Natural killer cell (primary cell): ENCODE measurements at regions of chr6 and their contacts with region 1.

Region 1: GRCh38 chr6:45922728-45923351 is 92.8 kb downstream of the CLIC5 start:
- DNase-seq: peak; percentile 42 to 70
- ATAC-seq: peak; percentile 50 to 73 (median 69)
- H3K4me3 ChIP-seq: no peak overlapping the region
- H3K4me3 Mint-ChIP-seq: no peak overlapping the region
- H3K27ac ChIP-seq: no peak overlapping the region
- H3K27ac Mint-ChIP-seq: no peak overlapping the region
- H3K4me1 ChIP-seq: no peaks in the 10 kb centered on the region
- H3K4me1 Mint-ChIP-seq: peaks cover 6 to 10% of the 10 kb centered on the region in 2 donors
- H3K27me3 ChIP-seq: no peaks in the 10 kb centered on the region
- H3K27me3 Mint-ChIP-seq: peaks cover 0 to 5% of the 10 kb centered on the region in 2 donors
- CTCF ChIP-seq: peak; percentile 67

Region 2: GRCh38 chr6:44475779-44476434 is 1446.9 kb before region 1 on chr6:
- intact Hi-C with region 1: loop called (anchors 2 kb)
- DNase-seq: peak; percentile 37 to 77
- ATAC-seq: peak; percentile 51 to 81 (median 70)
- H3K4me3 ChIP-seq: no peak overlapping the region
- H3K4me3 Mint-ChIP-seq: no peak overlapping the region
- H3K27ac ChIP-seq: no peak overlapping the region
- H3K27ac Mint-ChIP-seq: no peak overlapping the region
- H3K4me1 ChIP-seq: peaks cover 8% of the 10 kb centered on the region
- H3K4me1 Mint-ChIP-seq: no peaks in the 10 kb centered on the region
- H3K27me3 ChIP-seq: no peaks in the 10 kb centered on the region
- H3K27me3 Mint-ChIP-seq: peaks cover 9 to 13% of the 10 kb centered on the region in 2 donors
- CTCF ChIP-seq: peak; percentile 58

Region 3: DNA sequence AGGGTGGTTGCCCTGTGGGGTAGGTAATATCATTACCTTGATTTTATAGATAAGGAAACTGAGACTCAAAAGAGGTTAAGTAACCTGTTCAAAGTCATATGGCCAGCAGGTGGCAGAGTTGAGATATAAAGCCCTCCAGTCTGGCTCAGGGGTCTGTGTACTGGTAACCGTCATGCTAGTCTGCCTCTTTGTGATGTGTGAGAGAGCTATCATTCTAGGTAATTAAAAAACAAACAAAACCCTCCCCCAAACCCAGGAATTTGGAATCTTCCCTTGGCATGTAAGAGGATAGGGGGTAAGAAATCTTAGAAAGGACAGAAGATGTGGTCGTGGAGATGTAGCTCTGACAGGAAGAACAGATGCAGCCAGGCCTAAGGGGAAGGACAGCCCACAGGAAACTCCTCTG is 1329.3 kb before region 1 on chr6:
- intact Hi-C with region 1: loop called (anchors 2 kb)
- DNase-seq: peak in 1 of 2 donors; percentile 73
- ATAC-seq: peak in 2 of 3 donors; percentile 29 to 50
- H3K4me3 ChIP-seq: no peak overlapping the region
- H3K4me3 Mint-ChIP-seq: no peak overlapping the region
- H3K27ac ChIP-seq: no peak overlapping the region
- H3K27ac Mint-ChIP-seq: no peak overlapping the region
- H3K4me1 ChIP-seq: no peaks in the 10 kb centered on the region
- H3K4me1 Mint-ChIP-seq: peaks cover 5 to 6% of the 10 kb centered on the region in 2 donors
- H3K27me3 ChIP-seq: no peaks in the 10 kb centered on the region
- H3K27me3 Mint-ChIP-seq: peaks cover 7 to 23% of the 10 kb centered on the region in 2 donors
- CTCF ChIP-seq: peak; percentile 48

Region 4: GRCh38 chr6:45590225-45590624 is 332.6 kb before region 1 on chr6:
- intact Hi-C with region 1: no loop called
- DNase-seq: no peak
- ATAC-seq: peak in 1 of 3 donors; percentile 30
- H3K4me3 ChIP-seq: no peak overlapping the region
- H3K4me3 Mint-ChIP-seq: no peak overlapping the region
- H3K27ac ChIP-seq: no peak overlapping the region
- H3K27ac Mint-ChIP-seq: peak overlapping the region in 1 of 2 donors; percentile 27
- H3K4me1 ChIP-seq: peaks cover 34% of the 10 kb centered on the region
- H3K4me1 Mint-ChIP-seq: peaks cover 47 to 48% of the 10 kb centered on the region in 2 donors
- H3K27me3 ChIP-seq: no peaks in the 10 kb centered on the region
- H3K27me3 Mint-ChIP-seq: peaks cover 9 to 12% of the 10 kb centered on the region in 2 donors
- CTCF ChIP-seq: no peak